ENCODE measurements at regions of chr10 and their contacts with region 1.

Region 1: GRCh38 chr10:8873310-8873709 is 818.8 kb downstream of the GATA3 start:
- DNase-seq: peak; percentile 37
- H3K4me3 ChIP-seq: no peak overlapping the region
- H3K27ac ChIP-seq: no peak overlapping the region
- H3K4me1 ChIP-seq: no peaks in the 10 kb centered on the region
- H3K27me3 ChIP-seq: no peaks in the 10 kb centered on the region
- CTCF ChIP-seq: peak; percentile 37 to 54

Region 2: DNA sequence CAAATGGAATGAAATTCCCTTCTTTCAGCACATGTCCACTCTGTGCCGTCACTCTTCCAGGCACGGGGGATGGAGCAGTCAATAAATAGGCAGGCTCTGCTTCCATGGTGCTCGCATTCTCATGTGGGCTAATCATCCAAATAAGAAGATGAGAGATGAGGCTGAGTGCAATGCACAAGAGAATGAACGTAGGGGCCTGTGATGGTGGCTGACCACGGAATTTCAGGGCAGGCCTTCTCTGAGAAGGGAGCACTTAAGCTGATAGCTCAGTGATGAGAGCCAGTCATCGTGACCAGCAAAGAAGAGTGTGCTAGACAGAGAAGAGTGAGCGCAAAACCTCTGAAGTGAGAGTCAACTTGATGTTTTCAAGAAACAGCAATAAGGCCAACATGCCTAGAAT is 1007.1 kb before region 1 on chr10:
- CTCF ChIA-PET with region 1: no interaction called
- dilution Hi-C with region 1: no loop called
- in situ Hi-C with region 1: loop called (anchors 10 to 25 kb)
- intact Hi-C with region 1: no loop called
- DNase-seq: no peak
- H3K4me3 ChIP-seq: no peak overlapping the region
- H3K27ac ChIP-seq: no peak overlapping the region
- H3K4me1 ChIP-seq: no peaks in the 10 kb centered on the region
- H3K27me3 ChIP-seq: no peaks in the 10 kb centered on the region
- CTCF ChIP-seq: no peak

Region 3: DNA sequence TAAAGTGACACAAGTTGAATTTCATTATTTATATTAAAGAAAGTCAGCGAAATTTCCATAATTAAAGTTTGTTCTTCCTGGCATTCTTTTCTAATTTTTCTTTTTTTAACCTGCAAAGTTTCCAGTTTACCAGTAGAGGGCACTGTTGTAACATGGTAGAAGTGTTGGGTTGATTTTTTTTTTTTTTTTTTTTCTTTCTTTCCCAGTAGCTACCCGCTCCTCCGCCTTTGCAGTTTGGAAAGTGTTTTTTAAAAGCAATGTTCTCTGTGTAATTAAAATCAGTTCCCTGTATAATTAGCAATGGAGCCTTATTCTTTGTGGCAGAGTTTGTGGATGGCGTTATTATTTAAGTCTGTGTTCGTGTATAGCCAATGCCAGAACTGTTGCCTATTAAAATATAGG is 1001.3 kb before region 1 on chr10:
- CTCF ChIA-PET with region 1: no interaction called
- dilution Hi-C with region 1: no loop called
- in situ Hi-C with region 1: loop called (anchors 10 to 25 kb)
- intact Hi-C with region 1: loop called (anchors 1 kb)
- DNase-seq: peak; percentile 27
- H3K4me3 ChIP-seq: peak overlapping the region; percentile 47 to 78 (median 47)
- H3K27ac ChIP-seq: no peak overlapping the region
- H3K4me1 ChIP-seq: no peaks in the 10 kb centered on the region
- H3K27me3 ChIP-seq: no peaks in the 10 kb centered on the region
- CTCF ChIP-seq: peak; percentile 51 to 69

Region 4: DNA sequence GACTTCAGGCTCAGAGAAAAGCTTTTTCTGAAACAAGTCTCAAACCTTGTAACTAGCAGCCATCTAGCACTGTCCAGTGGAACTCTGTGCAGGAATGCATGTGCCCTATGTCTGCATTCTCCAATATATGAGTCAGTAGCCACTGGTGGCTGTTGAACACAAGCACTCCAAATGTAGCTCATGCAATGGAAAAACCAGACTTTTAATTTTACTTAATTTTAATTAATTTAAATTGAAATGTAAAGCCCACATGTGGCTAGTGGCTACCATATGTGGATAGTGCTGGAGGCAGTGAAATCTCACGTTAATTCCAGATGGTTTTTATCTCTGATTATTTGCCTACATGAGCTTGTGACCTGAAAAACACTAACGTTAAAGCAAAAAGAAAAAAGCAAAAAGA is 593.7 kb before region 1 on chr10:
- CTCF ChIA-PET with region 1: no interaction called
- dilution Hi-C with region 1: no loop called
- in situ Hi-C with region 1: no loop called
- intact Hi-C with region 1: loop called (anchors 10 kb)
- DNase-seq: peak; percentile 63
- H3K4me3 ChIP-seq: no peak overlapping the region
- H3K27ac ChIP-seq: no peak overlapping the region
- H3K4me1 ChIP-seq: peaks cover 9% of the 10 kb centered on the region
- H3K27me3 ChIP-seq: no peaks in the 10 kb centered on the region
- CTCF ChIP-seq: no peak

Region 5: GRCh38 chr10:8596929-8597472 is 276.3 kb before region 1 on chr10:
- CTCF ChIA-PET with region 1: no interaction called
- dilution Hi-C with region 1: no loop called
- in situ Hi-C with region 1: no loop called
- intact Hi-C with region 1: loop called (anchors 5 kb)
- DNase-seq: peak; percentile 84
- H3K4me3 ChIP-seq: no peak overlapping the region
- H3K27ac ChIP-seq: peak overlapping the region; percentile 17
- H3K4me1 ChIP-seq: peaks cover 28% of the 10 kb centered on the region
- H3K27me3 ChIP-seq: no peaks in the 10 kb centered on the region
- CTCF ChIP-seq: no peak

Region 6: DNA sequence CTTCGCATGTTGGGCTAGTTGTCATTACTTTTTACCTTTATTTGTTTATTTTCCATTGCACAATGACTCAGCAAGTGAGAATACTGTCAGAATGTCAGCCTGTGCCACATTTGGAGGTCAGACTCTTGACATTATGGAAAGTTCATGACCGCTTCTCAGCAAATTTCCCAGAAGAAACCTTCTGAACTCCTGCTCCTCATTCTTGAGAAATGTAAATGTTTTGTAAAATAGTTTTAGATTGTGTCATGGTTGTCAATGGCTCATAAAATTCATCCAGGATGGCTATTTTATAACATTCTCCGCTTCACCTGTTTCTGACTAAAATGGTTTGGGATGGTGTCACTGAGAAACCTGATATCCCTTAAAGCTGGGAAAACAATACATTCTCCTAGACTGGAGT is 147.2 kb before region 1 on chr10:
- CTCF ChIA-PET with region 1: no interaction called
- dilution Hi-C with region 1: no loop called
- in situ Hi-C with region 1: no loop called
- intact Hi-C with region 1: no loop called
- DNase-seq: no peak
- H3K4me3 ChIP-seq: no peak overlapping the region
- H3K27ac ChIP-seq: no peak overlapping the region
- H3K4me1 ChIP-seq: no peaks in the 10 kb centered on the region
- H3K27me3 ChIP-seq: no peaks in the 10 kb centered on the region
- CTCF ChIP-seq: no peak

Region 7: DNA sequence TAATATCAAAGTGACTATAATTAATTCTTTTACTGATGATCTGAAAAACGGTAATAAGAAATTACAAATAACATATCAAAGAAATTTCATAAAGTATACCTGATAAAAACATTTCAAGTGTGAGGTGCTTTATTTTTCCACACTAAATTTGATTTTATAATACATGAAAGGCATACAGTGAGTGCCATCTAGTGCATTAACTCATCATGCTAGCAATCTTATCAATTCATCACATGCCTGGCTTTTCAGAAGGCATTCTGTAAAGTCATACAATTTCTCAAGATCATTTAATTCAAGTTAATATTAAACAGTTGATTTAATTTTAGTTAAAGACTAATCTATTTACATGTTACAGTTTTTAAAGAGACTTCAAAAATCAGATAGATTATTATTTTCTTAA is 202.1 kb after region 1 on chr10:
- CTCF ChIA-PET with region 1: no interaction called
- dilution Hi-C with region 1: no loop called
- in situ Hi-C with region 1: no loop called
- intact Hi-C with region 1: loop called (anchors 1 kb)
- DNase-seq: no peak
- H3K4me3 ChIP-seq: no peak overlapping the region
- H3K27ac ChIP-seq: no peak overlapping the region
- H3K4me1 ChIP-seq: no peaks in the 10 kb centered on the region
- H3K27me3 ChIP-seq: no peaks in the 10 kb centered on the region
- CTCF ChIP-seq: peak; percentile 15 to 46

Region 8: GRCh38 chr10:9209105-9209798 is 335.9 kb after region 1 on chr10:
- CTCF ChIA-PET with region 1: no interaction called
- dilution Hi-C with region 1: no loop called
- in situ Hi-C with region 1: loop called in 1 of 2 experiments (anchors 25 kb)
- intact Hi-C with region 1: loop called (anchors 1 kb)
- DNase-seq: peak; percentile 46
- H3K4me3 ChIP-seq: no peak overlapping the region
- H3K27ac ChIP-seq: no peak overlapping the region
- H3K4me1 ChIP-seq: no peaks in the 10 kb centered on the region
- H3K27me3 ChIP-seq: no peaks in the 10 kb centered on the region
- CTCF ChIP-seq: peak; percentile 90

Measured in mammary epithelial cell (primary cell).